CD4-positive, alpha-beta T cell (primary cell): ENCODE measurements at regions of chr6 and their contacts with region 1.

Region 1: DNA sequence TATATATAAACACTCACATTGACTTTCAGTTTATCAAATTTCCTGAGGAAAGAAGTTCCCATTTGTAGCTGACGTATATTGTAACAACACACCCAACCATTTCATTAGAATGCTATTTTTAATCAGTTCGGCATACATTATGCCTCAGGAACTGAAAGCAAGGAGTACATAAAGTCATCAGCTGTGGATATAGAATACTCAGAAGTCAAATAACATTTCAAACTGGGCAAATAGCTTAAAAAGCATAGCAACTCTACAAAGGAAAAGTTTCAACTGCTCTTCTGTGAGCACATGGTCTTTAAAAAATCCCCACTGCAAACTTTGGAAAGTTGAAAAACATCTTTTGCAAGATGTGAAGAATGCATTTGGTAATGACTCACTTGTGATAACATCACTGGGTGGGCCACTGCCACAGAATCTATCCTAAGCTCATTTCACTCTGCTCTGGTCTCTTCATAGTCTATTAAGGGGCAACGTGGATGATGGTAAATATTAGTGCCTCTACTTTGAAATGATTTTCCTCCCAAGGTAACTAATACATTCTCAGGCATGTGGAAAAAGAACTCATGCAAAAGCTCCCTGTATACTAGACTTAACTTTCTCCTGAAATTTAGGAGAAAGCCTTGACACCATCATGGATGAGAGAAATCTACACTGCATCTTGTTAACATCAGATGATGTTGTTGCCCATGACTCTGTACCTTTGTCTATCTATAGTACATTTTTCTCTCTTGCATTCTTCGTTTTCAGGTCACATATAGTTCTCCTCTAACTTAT is 49.2 kb downstream of the FYN start:
- DNase-seq: peak in 4 of 14 experiments; percentile 45 to 74 (median 59)
- ATAC-seq: peak; percentile 70
- H3K4me3 ChIP-seq: no peak overlapping the region
- H3K4me3 Mint-ChIP-seq: peak overlapping the region; percentile 1
- H3K27ac ChIP-seq: peak overlapping the region; percentile 34 to 44
- H3K27ac Mint-ChIP-seq: peak overlapping the region; percentile 58
- H3K4me1 ChIP-seq: peaks cover 45% of the 10 kb centered on the region
- H3K4me1 Mint-ChIP-seq: peaks cover 77% of the 10 kb centered on the region
- H3K27me3 ChIP-seq: no peaks in the 10 kb centered on the region
- H3K27me3 Mint-ChIP-seq: no peaks in the 10 kb centered on the region
- CTCF ChIP-seq: no peak

Region 2: GRCh38 chr6:111812060-111813038 is 11.7 kb before region 1 on chr6:
- CTCF ChIA-PET with region 1: interaction called, 11 read pairs
- POLR2A ChIA-PET with region 1: interaction called, 17 read pairs
- intact Hi-C with region 1: loop called in 1 of 2 experiments (anchors 2 kb)
- DNase-seq: peak in 3 of 14 experiments; percentile 22 to 49 (median 37)
- ATAC-seq: peak; percentile 21
- H3K4me3 ChIP-seq: no peak overlapping the region
- H3K4me3 Mint-ChIP-seq: peak overlapping the region; percentile 46
- H3K27ac ChIP-seq: peak overlapping the region in 1 of 2 donors; percentile 43
- H3K27ac Mint-ChIP-seq: peak overlapping the region; percentile 91
- H3K4me1 ChIP-seq: peaks cover 57% of the 10 kb centered on the region
- H3K4me1 Mint-ChIP-seq: peaks cover 90% of the 10 kb centered on the region
- H3K27me3 ChIP-seq: no peaks in the 10 kb centered on the region
- H3K27me3 Mint-ChIP-seq: no peaks in the 10 kb centered on the region
- CTCF ChIP-seq: no peak

Region 3: DNA sequence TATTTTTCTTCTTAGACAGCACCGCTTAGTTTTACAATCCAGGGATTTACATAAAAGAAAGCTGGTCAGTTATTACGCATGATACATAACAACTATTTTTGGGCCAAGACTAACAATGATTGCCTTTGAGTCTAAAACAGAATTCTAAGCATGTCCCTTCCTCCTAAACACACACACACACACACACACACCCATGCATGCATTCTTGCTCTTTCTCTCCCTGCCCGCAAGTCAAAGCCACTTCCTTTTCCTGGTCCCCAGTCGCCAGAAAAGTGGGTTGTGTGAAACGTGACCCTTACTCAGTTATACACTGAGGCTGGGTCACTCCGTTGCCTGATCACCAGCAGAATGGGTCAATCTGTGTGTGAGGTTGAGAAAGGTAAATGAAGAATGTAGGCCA is 17.8 kb after region 1 on chr6:
- CTCF ChIA-PET with region 1: interaction called, 8 read pairs
- POLR2A ChIA-PET with region 1: interaction called, 15 read pairs
- intact Hi-C with region 1: loop called in 1 of 2 experiments (anchors 2 kb)
- DNase-seq: peak in 7 of 14 experiments; percentile 35 to 87 (median 63)
- ATAC-seq: peak; percentile 3
- H3K4me3 ChIP-seq: peak overlapping the region; percentile 0
- H3K4me3 Mint-ChIP-seq: no peak overlapping the region
- H3K27ac ChIP-seq: peak overlapping the region; percentile 54 to 67
- H3K27ac Mint-ChIP-seq: no peak overlapping the region
- H3K4me1 ChIP-seq: peaks cover 92% of the 10 kb centered on the region
- H3K4me1 Mint-ChIP-seq: no peaks in the 10 kb centered on the region
- H3K27me3 ChIP-seq: no peaks in the 10 kb centered on the region
- H3K27me3 Mint-ChIP-seq: no peaks in the 10 kb centered on the region
- CTCF ChIP-seq: no peak